GM10248 (cell line): ENCODE measurements at regions of chr3 and their contacts with region 1.

Region 1: DNA sequence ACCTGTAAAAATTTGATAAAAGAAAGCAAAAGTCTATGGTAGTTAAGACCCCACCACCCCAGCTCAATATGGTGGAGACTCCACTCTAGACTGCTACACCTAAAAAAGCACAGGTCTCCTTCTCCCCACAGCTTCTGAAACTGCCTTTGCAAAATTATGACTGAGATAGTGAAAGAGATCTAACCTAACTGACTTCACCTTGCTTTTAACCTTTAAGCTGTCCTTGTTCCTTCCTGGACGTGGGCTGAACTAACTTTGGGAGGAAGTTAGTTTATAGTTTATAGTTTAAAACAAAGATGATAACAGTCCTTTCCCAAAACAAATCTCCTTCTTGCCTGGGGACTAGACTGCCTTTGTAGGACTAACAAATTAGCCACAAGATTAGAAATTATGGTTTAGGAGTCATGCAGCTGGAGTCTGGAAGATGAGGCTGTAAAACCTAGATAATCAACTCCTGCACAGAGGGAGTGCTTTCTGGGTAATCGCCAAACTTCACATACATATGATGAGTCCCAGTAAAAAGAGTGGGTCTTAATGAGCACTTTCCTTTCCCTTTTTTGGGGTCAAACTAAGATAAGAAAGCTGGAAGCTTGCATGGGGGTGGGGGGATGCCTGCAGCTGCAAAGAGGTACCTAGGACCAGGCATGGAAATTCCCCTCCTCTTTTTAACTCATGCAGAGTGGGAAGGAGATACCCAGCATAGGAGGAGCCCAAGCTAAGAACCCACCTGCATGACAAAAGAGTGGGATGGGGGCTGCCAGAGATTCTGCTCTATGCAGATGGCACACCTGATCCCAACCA is 17.5 kb downstream of the CCR8 start:
- DNase-seq: no peak
- CTCF ChIP-seq: no peak

Region 2: DNA sequence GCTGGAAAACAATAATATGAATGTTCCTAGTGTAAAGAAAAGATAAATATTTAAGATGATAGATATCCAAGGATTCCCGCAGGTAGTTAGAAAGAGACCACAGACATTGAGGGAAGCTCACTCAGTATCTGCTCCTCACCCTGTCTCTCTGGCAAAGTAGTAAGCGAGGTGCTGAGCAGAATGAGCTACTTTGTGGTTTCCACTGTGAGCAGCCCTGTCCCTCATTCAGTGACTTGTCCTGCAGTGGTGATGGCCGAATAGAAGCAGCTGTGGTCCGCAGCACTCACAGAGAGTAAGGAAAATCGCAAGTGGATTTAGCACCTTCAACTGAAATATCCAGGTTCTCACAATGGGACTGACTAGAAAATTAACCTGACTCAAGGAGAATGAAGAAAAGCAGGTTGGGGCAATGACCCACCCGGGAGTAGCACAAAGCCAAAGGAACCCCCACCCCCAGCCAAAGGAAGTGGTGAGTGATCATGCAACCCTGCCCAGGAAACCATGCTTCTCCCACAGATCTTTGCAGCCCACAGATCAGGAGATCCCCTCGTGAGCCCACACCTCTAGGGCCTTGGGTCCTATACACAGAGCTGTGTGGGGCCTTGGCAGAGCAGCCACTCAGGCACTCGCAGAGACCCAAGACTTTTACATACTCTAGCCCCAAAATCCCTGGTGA is 14.4 kb after region 1 on chr3:
- CTCF ChIA-PET with region 1: interaction called, 18 read pairs
- POLR2A ChIA-PET with region 1: no interaction called
- DNase-seq: no peak
- CTCF ChIP-seq: no peak

Region 3: GRCh38 chr3:39388741-39389248 is 41.8 kb after region 1 on chr3:
- CTCF ChIA-PET with region 1: no interaction called
- POLR2A ChIA-PET with region 1: no interaction called
- DNase-seq: peak; percentile 73
- CTCF ChIP-seq: no peak